PC-9 (cell line): ENCODE measurements at regions of chr1 and their contacts with region 1.

Region 1: DNA sequence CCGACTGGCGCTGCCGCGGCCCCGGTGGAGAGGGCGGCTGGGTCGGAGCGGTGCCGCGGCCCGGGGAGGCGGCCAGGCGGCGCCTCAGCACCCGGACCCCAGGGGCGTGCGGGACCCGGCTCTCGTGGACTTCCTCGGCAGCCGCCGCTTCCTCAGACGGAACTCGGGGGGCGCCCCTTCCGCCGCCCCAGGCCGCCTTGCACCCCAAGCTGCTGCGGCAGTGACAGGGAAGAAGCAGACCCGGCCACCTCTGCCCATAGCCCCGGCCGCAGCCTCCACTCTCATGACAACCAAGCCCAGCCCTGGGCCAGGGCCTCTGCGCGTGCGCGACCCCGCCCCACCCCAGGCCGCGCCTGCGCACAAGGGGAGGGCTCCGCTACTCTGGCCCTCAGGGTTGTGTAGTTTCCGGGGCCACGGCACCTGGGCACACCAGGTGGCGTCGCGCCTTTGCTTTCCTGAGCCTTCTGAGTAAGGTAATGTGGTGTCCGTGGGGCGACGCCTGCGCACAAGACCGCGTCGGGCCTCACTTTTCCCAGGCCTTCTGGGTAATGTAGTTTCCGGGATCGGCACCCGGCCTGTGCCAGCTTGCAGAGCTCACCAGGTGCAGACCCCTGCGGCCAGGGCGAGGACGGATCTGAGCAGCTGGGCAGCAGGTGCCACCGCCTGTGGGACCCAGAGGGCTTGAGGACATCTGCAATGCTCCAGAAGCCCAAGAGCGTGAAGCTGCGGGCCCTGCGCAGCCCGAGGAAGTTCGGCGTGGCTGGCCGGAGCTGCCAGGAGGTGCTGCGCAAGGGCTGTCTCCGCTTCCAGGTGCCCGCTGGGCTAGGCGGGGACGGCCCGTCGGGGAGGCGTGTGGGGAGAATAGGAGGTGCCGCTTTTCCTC is at the starts of genes CEP104 and DFFB:
- DNase-seq: peak; percentile 96 to 97
- H3K4me3 ChIP-seq: peak within 1 kb of the TSS; percentile 84
- H3K27ac ChIP-seq: no peak within 1 kb of the TSS
- H3K4me1 ChIP-seq: peaks cover 16% of the 10 kb centered on the region
- H3K27me3 ChIP-seq: no peaks in the 10 kb centered on the region
- CTCF ChIP-seq: peak; percentile 34; the same call in 1 of the 2 replicates
- total RNA-seq, gene CEP104: 47.7 and 57.7 TPM in 2 replicates
- total RNA-seq, gene DFFB: 4.7 and 5.9 TPM in 2 replicates

Region 2: GRCh38 chr1:3890389-3891328 is 33.5 kb after region 1 on chr1:
- CTCF ChIA-PET with region 1: no interaction called
- POLR2A ChIA-PET with region 1: interaction called, 12 read pairs
- intact Hi-C with region 1: no loop called
- DNase-seq: no peak
- H3K4me3 ChIP-seq: no peak overlapping the region
- H3K27ac ChIP-seq: no peak overlapping the region
- H3K4me1 ChIP-seq: no peaks in the 10 kb centered on the region
- H3K27me3 ChIP-seq: no peaks in the 10 kb centered on the region
- CTCF ChIP-seq: no peak

Region 3: GRCh38 chr1:3900119-3900968 is 43.2 kb after region 1 on chr1 and contains the start of gene C1orf174:
- CTCF ChIA-PET with region 1: no interaction called
- POLR2A ChIA-PET with region 1: interaction called, 5 read pairs
- intact Hi-C with region 1: loop called (anchors 1 kb)
- DNase-seq: peak; percentile 85 to 88
- H3K4me3 ChIP-seq: peak within 1 kb of the TSS; percentile 80
- H3K27ac ChIP-seq: peak within 1 kb of the TSS; percentile 98
- H3K4me1 ChIP-seq: peaks cover 14% of the 10 kb centered on the region; the same call in 1 of the 2 replicates
- H3K27me3 ChIP-seq: no peaks in the 10 kb centered on the region
- CTCF ChIP-seq: no peak
- total RNA-seq, gene C1orf174: 22.1 and 26.2 TPM in 2 replicates